ENCODE measurements at regions of chr3 and their contacts with region 1.

Region 1: GRCh38 chr3:38645601-38646000 is 3.9 kb downstream of the SCN5A start:
- DNase-seq: no peak
- H3K4me3 ChIP-seq: no peak overlapping the region
- H3K27ac ChIP-seq: no peak overlapping the region
- H3K4me1 ChIP-seq: no peaks in the 10 kb centered on the region
- H3K27me3 ChIP-seq: peaks cover 48% of the 10 kb centered on the region
- CTCF ChIP-seq: no peak

Region 2: DNA sequence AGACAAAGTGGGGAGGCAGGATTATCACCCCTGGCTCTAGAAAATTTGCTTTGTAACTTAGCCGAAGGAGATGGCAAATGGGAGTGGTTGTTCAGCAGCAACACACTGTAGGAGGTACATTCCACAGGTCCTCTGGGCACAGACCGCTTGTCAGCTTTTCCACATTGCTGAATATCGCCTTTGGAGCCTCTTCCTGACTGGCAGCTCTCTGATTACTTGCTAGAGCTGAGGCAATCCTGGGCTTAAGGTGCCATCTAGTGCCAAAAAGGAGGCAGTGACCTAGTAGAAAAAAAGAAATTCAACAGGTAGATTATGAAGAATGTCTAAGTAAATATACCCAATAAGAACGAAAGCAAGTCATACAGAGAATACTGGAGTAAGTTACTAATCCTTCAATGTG is 16.9 kb after region 1 on chr3:
- CTCF ChIA-PET with region 1: interaction called, 14 read pairs
- POLR2A ChIA-PET with region 1: no interaction called
- intact Hi-C with region 1: no loop called
- DNase-seq: peak; percentile 26 to 46
- H3K4me3 ChIP-seq: no peak overlapping the region
- H3K27ac ChIP-seq: no peak overlapping the region
- H3K4me1 ChIP-seq: no peaks in the 10 kb centered on the region
- H3K27me3 ChIP-seq: peaks cover 25% of the 10 kb centered on the region
- CTCF ChIP-seq: peak; percentile 74

Measured in PC-9 (cell line).